ENCODE measurements at regions of chr10 and their contacts with region 1.

Region 1: GRCh38 chr10:35493196-35494118 is 111.7 kb upstream of the GJD4 start:
- DNase-seq: no peak
- H3K4me3 ChIP-seq: no peak overlapping the region
- H3K27ac ChIP-seq: no peak overlapping the region
- H3K27me3 ChIP-seq: no peaks in the 10 kb centered on the region
- CTCF ChIP-seq: no peak

Region 2: DNA sequence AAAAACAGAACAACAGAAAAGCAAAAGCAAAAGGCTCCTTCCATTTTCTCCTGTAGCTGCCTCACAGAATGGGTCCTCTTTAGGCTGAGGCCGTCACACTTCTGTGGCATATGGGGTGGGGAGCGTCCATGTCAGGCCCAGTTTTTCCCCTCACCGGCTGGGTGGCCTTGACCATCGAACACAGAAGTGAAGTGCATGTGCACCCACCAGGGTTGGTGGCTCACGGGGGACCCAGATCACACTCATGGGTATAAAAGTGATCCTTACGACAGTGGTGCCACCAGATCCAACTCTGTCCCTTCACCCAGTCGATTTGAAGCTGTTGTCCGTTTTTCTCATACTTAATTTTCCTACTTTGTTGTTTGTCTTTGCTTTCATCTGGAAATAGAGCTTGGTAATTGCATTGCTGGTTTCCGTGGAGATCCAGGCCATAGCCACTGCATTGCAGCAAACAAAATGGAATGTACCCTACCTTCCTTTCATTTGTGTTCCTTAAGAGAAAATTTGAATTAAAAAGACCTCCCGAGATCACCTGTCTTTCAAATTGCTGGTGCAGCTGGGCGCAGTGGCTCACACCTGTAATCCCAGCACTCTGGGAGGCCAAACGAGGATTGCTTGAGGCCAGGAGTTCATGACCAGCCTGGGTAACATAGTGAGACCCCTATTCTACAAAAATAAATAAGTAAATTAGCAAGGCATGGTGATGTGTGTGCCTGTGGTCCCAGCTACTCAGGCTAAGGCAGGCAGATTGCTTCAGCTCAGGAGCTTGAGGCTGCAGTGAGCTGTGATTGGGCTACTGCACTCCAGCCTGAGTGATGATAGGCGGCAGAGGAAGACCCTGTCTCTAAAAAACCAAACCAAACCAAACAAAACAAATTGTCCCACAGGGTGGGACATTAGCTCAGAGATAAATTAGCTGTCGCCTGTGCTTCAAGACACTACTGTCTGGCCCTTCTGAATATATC is 100.9 kb after region 1 on chr10:
- CTCF ChIA-PET with region 1: no interaction called
- POLR2A ChIA-PET with region 1: interaction called, 15 read pairs
- DNase-seq: no peak
- H3K4me3 ChIP-seq: no peak overlapping the region
- H3K27ac ChIP-seq: no peak overlapping the region
- H3K27me3 ChIP-seq: peaks cover 9% of the 10 kb centered on the region
- CTCF ChIP-seq: no peak